Right ventricle myocardium superior (tissue), 1 donor: ENCODE measurements at regions of chr5 and their contacts with region 1.

Region 1: DNA sequence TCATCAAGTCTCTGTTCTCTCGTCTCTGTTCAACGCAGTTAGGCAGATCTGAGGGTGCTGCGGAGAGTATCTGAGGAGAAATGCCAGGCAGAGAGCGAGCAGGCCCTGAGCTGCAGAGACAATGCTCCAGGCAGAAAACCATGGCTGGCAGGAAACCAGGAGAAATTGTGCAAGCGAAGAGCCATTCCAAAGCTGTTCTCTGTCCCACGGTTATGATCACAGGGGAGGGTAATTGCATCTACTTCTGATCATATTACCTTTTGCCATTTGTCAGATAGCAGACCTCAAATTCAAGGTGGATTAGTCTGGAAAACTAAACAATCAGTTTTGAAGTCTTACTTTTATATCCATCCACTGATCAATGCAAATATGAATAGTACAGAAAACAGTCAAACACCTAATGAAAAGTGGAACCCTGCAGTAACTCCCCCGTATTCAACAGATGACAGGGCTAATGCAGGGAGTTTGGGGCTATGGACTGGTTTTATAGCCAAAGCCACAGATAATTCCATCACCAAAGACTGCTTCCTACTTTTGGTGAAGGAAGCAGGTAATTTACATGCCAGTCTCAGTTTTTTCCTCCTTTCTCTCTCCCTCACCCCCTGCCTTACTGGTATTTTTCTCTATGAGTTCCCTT is 228.0 kb downstream of the DCP2 start:
- DNase-seq: peak; percentile 73
- ATAC-seq: peak; percentile 75

Region 2: DNA sequence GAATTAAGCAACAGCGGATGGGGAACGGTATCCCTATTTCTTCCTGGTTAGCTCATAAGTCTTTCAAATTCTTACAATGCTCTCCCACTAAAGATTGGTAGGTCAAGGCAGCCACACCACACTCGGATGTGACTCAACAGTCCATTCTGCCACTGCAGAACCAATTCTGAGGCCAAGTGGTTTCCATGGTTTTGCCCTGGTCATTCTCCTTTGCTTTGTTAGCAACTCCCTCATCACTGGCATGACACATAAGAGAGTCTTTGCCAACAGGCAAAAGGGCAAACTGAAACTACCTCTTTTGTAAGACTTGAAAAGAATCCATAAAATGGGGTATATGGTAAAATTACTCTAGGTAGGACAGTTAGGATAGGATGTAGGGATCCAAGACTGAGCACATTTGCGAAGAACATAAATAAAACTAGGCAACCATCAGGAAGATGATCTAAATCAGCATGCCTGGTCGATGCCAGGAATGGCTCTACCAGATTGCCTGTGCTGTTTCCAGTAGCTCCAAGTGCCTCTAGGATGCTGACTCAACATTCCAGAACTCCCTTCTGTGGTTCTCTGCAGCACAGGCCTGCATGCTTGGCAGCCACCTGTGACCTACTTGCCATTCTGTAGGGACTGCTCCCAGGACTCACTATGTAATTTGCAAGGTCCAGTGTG is 122.6 kb before region 1 on chr5:
- intact Hi-C with region 1: loop called (anchors 10 kb)
- DNase-seq: no peak
- ATAC-seq: peak; percentile 27

Region 3: GRCh38 chr5:113311301-113311700 is 106.7 kb after region 1 on chr5:
- intact Hi-C with region 1: no loop called
- DNase-seq: no peak
- ATAC-seq: no peak